ENCODE measurements at regions of chr12 and their contacts with region 1.

Region 1: GRCh38 chr12:27523642-27524493 is at the start of gene PPFIBP1:
- DNase-seq: peak; percentile 99 to 100
- H3K4me3 ChIP-seq: peak within 1 kb of the TSS; percentile 61 to 70
- H3K27ac ChIP-seq: peak within 1 kb of the TSS; percentile 87
- H3K4me1 ChIP-seq: peaks cover 25% of the 10 kb centered on the region
- H3K27me3 ChIP-seq: no peaks in the 10 kb centered on the region
- CTCF ChIP-seq: peak in 1 of 3 experiments; percentile 36
- POLR2A ChIP-seq: peak in 1 of 2 donors; percentile 82
- total RNA-seq, gene PPFIBP1: 101 TPM

Region 2: GRCh38 chr12:27332407-27333301 is 191.2 kb before region 1 on chr12 and contains the start of gene BMAL2:
- intact Hi-C with region 1: no loop called
- DNase-seq: no peak
- H3K4me3 ChIP-seq: peak within 1 kb of the TSS; percentile 61 to 67
- H3K27ac ChIP-seq: peak within 1 kb of the TSS; percentile 60
- H3K4me1 ChIP-seq: peaks cover 22% of the 10 kb centered on the region
- H3K27me3 ChIP-seq: no peaks in the 10 kb centered on the region
- CTCF ChIP-seq: no peak
- POLR2A ChIP-seq: no peak
- total RNA-seq, gene BMAL2: 9.8 TPM

Region 3: DNA sequence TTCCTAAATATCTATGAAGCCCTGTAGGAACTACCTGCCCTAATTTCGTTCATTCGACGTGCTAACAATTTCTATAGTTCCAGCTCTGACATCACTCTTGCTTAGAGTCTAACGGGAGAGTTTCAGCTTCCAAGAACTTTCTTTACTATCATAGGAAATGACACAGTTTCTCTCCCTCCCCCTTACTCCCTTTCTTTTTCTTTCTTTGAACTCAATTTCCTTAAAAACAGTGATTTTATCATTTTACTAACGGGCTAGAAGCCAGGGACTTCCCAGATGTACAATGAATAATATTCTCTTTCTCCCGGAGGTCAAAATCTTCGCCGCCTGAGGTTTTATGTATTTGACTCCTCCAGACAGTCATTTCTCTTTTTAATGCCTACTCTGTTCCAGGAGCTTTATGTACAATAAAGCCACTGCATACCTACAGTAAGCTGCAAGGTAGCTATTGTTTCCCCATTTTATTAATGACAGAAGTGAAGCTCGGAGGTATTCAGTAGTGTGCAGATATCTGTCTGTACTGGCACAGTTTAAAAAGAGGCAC is 61.6 kb before region 1 on chr12:
- intact Hi-C with region 1: loop called (anchors 2 kb)
- DNase-seq: no peak
- H3K4me3 ChIP-seq: no peak overlapping the region
- H3K27ac ChIP-seq: no peak overlapping the region
- H3K4me1 ChIP-seq: peaks cover 14% of the 10 kb centered on the region
- H3K27me3 ChIP-seq: no peaks in the 10 kb centered on the region
- CTCF ChIP-seq: no peak
- POLR2A ChIP-seq: no peak

Region 4: DNA sequence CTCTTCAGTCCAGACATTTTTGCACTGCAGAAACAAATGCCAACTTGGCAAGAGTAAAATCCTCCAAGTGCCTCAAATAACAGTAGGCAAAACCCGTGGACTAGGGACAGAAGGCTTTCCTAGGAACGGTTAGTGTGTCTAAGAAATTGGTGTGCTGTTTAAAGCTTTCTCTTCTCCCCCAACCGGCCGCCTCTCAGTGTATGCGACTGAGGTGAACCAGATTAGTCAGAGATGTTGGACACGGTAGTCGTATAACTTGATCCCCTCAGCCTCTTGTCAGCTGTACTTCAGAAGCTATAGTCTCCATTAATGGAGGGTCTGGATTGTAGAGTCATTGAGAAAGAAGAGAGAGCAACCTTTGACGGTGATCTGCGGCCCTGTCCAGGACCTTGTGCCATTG is 21.8 kb after region 1 on chr12:
- intact Hi-C with region 1: loop called (anchors 2 kb)
- DNase-seq: no peak
- H3K4me3 ChIP-seq: no peak overlapping the region
- H3K27ac ChIP-seq: no peak overlapping the region
- H3K4me1 ChIP-seq: peaks cover 84% of the 10 kb centered on the region
- H3K27me3 ChIP-seq: no peaks in the 10 kb centered on the region
- CTCF ChIP-seq: no peak
- POLR2A ChIP-seq: no peak

Region 5: DNA sequence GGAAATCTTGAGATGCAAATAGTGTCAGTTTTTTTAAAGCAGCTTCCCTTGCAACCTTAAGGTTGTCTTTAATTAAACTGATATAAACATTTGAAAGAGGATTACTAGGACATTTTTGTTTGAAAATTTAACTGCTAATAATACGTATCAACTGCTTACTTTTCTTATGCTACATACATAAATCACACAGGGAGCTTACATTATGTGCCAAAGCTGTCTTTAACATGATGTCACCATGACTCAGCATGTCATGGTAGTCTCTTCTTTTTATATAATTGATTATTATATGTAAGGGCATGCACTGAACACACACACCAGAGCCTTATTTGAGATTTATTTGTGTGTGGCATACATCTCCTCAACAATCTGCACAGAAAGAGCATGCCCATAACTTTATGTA is 511.6 kb after region 1 on chr12:
- intact Hi-C with region 1: no loop called
- DNase-seq: no peak
- H3K4me3 ChIP-seq: no peak overlapping the region
- H3K27ac ChIP-seq: no peak overlapping the region
- H3K4me1 ChIP-seq: no peaks in the 10 kb centered on the region
- H3K27me3 ChIP-seq: no peaks in the 10 kb centered on the region
- CTCF ChIP-seq: no peak
- POLR2A ChIP-seq: no peak

Measured in vagina (tissue), 2 donors.